Mammary epithelial cell (primary cell): ENCODE measurements at regions of chr14 and their contacts with region 1.

Region 1: DNA sequence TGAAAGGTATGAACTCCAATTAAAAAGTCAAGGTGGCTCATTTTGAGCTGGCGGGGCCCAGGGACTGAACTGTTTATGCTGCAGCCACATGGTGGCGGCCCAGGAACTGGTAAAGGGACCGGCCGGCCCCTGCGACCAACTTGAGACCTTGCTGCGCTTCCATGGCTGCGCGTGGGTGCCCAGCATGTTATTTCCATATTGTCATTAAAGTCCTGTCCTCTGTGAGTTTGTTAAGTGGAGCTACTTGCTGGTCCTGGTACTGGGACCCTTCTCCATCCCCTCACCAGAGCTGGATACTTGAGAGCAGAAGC is 62.3 kb downstream of the BEGAIN start:
- DNase-seq: no peak
- H3K4me3 ChIP-seq: no peak overlapping the region
- H3K27ac ChIP-seq: no peak overlapping the region
- H3K4me1 ChIP-seq: no peaks in the 10 kb centered on the region
- H3K27me3 ChIP-seq: no peaks in the 10 kb centered on the region
- CTCF ChIP-seq: no peak

Region 2: GRCh38 chr14:100486025-100486828 is 38.7 kb before region 1 on chr14:
- CTCF ChIA-PET with region 1: no interaction called
- dilution Hi-C with region 1: loop called (anchors 5 kb)
- in situ Hi-C with region 1: no loop called
- intact Hi-C with region 1: no loop called
- DNase-seq: peak; percentile 39
- H3K4me3 ChIP-seq: no peak overlapping the region
- H3K27ac ChIP-seq: no peak overlapping the region
- H3K4me1 ChIP-seq: no peaks in the 10 kb centered on the region
- H3K27me3 ChIP-seq: no peaks in the 10 kb centered on the region
- CTCF ChIP-seq: no peak